H1 (cell line): ENCODE measurements at regions of chr2 and their contacts with region 1.

Region 1: DNA sequence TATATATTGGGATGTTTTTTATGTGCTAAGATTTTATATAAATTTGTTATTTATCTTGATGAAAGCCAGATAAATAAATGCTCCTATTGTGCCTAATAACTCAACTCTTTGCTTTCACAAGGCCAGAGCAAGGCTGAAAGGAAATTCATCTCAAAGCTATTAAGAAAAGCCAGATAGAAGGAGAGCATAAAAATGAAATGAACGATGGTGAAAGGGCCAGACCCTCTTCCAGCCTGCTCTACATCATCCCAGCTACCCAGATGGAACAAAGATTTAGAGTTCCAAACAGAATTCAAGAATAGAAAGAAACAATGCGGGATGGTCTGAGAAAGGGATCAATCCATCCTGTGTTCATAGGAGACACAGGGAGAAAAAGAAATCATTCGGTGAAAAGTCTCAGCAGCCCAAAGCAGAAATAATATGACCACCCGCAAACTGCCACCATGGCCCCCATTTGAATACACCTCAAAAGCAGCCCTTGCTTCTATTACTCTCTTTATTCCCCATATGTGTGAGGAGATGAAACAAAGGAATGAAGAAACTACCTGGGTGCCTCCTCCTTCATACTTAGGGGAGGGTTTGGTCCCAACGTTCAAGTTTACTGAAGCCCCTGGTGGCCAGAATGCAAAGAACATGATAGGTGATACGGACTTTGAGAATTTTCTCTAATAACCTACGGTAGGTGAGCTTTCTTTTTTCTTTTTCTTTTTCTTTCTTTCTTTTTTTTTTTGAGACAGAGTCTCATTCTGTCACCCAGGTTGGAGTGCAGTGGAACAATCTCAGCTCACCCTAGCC is 110.1 kb upstream of the FBXO11 start:
- DNase-seq: peak in 1 of 2 experiments; percentile 48
- H3K4me3 ChIP-seq: no peak overlapping the region
- H3K27ac ChIP-seq: no peak overlapping the region
- H3K4me1 ChIP-seq: no peaks in the 10 kb centered on the region
- H3K27me3 ChIP-seq: no peaks in the 10 kb centered on the region
- CTCF ChIP-seq: peak in 2 of 3 experiments; percentile 38 to 65; a peak in 2 of 4 replicates
- EP300 ChIP-seq: no peak
- POLR2A ChIP-seq: no peak
- RAD21 ChIP-seq: peak; percentile 22 to 47; a peak in 3 of 4 replicates

Region 2: GRCh38 chr2:47798631-47799030 is 217.8 kb before region 1 on chr2:
- CTCF ChIA-PET with region 1: no interaction called
- POLR2A ChIA-PET with region 1: no interaction called
- DNase-seq: no peak
- H3K4me3 ChIP-seq: no peak overlapping the region
- H3K27ac ChIP-seq: no peak overlapping the region
- H3K4me1 ChIP-seq: no peaks in the 10 kb centered on the region
- H3K27me3 ChIP-seq: no peaks in the 10 kb centered on the region
- CTCF ChIP-seq: no peak
- EP300 ChIP-seq: no peak
- POLR2A ChIP-seq: no peak
- RAD21 ChIP-seq: no peak

Region 3: GRCh38 chr2:48026865-48027264 is 10.4 kb after region 1 on chr2:
- CTCF ChIA-PET with region 1: interaction called, 17 read pairs
- POLR2A ChIA-PET with region 1: no interaction called
- DNase-seq: no peak
- H3K4me3 ChIP-seq: no peak overlapping the region
- H3K27ac ChIP-seq: no peak overlapping the region
- H3K4me1 ChIP-seq: peaks cover 0 to 3% (median 0%) of the 10 kb centered on the region in 4 experiments; a peak in 1 of 7 replicates
- H3K27me3 ChIP-seq: no peaks in the 10 kb centered on the region
- CTCF ChIP-seq: no peak
- EP300 ChIP-seq: no peak
- POLR2A ChIP-seq: no peak
- RAD21 ChIP-seq: no peak

Region 4: GRCh38 chr2:48180557-48180956 is 164.1 kb after region 1 on chr2:
- CTCF ChIA-PET with region 1: no interaction called
- POLR2A ChIA-PET with region 1: no interaction called
- DNase-seq: no peak
- H3K4me3 ChIP-seq: no peak overlapping the region
- H3K27ac ChIP-seq: no peak overlapping the region
- H3K4me1 ChIP-seq: no peaks in the 10 kb centered on the region
- H3K27me3 ChIP-seq: no peaks in the 10 kb centered on the region
- CTCF ChIP-seq: no peak
- EP300 ChIP-seq: no peak
- POLR2A ChIP-seq: no peak
- RAD21 ChIP-seq: no peak